ENCODE measurements at regions of chr13 and their contacts with region 1.

Region 1: GRCh38 chr13:39616087-39616694 is 13.2 kb upstream of the LHFPL6 start:
- DNase-seq: peak; percentile 70
- H3K4me3 ChIP-seq: no peak overlapping the region
- H3K27ac ChIP-seq: no peak overlapping the region
- H3K4me1 ChIP-seq: no peaks in the 10 kb centered on the region
- H3K27me3 ChIP-seq: peaks cover 5 to 7% of the 10 kb centered on the region in 2 experiments
- CTCF ChIP-seq: peak; percentile 83 to 85
- POLR2A ChIP-seq: no peak

Region 2: DNA sequence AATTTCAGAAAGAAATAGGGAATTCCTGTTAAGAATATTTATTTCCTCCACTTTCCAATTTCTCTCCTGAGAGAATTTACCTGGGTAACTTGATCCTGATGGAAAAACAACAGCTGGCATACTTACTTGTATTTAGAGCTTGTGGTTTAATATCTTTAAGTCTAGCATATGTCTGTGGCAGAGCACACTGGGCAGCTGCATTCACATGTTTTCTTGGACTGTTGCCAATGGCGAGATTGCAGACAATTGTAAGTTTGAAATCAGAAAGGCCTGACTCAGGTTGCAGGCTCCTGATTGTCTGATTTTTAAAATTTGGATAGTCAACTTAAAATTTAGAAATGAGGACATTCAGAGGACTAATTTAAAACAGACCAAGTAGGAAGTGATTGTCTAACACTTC is 511.1 kb before region 1 on chr13:
- CTCF ChIA-PET with region 1: interaction called, 10 read pairs
- POLR2A ChIA-PET with region 1: no interaction called
- dilution Hi-C with region 1: no loop called
- intact Hi-C with region 1: no loop called
- DNase-seq: peak; percentile 18
- H3K4me3 ChIP-seq: no peak overlapping the region
- H3K27ac ChIP-seq: no peak overlapping the region
- H3K4me1 ChIP-seq: no peaks in the 10 kb centered on the region
- H3K27me3 ChIP-seq: peaks cover 9 to 14% of the 10 kb centered on the region in 2 experiments
- CTCF ChIP-seq: no peak
- POLR2A ChIP-seq: no peak

Region 3: GRCh38 chr13:39263033-39263432 is 353.2 kb before region 1 on chr13:
- CTCF ChIA-PET with region 1: interaction called, 27 read pairs
- POLR2A ChIA-PET with region 1: no interaction called
- dilution Hi-C with region 1: no loop called
- intact Hi-C with region 1: no loop called
- DNase-seq: peak; percentile 71
- H3K4me3 ChIP-seq: no peak overlapping the region
- H3K27ac ChIP-seq: no peak overlapping the region
- H3K4me1 ChIP-seq: no peaks in the 10 kb centered on the region
- H3K27me3 ChIP-seq: peaks cover 2 to 11% of the 10 kb centered on the region in 2 experiments
- CTCF ChIP-seq: peak; percentile 48
- POLR2A ChIP-seq: no peak

Region 4: DNA sequence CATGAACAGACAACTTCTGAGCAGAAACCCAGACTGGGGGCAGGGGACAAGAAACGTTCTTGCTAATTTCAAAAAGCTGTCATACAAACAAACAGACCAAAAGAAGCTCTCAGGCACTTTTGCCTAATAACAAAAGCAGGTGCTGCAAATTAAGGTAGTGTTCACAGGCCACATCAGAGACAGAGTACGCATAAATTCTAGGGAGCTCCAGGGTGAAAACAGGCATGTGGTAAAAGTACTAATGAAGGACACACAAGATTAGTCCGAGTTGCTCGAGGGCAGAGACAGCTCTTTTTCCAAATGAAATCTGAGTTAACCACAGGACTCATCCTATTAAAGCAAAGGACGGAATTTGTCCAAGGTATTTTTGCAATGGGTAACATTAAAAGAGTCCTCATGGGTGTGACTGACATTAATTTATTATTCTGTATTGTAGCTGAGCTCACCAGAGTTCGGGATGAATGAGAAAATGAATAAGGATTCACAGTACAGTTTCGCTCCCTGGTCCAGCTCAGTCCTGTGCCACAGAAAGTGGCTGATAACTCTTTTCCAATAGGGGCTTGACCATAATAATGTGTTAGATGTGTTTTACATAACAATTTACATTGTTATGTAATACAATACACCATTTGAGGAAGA is 210.5 kb before region 1 on chr13:
- CTCF ChIA-PET with region 1: interaction called, 29 read pairs
- POLR2A ChIA-PET with region 1: no interaction called
- dilution Hi-C with region 1: no loop called
- intact Hi-C with region 1: no loop called
- DNase-seq: no peak
- H3K4me3 ChIP-seq: no peak overlapping the region
- H3K27ac ChIP-seq: no peak overlapping the region
- H3K4me1 ChIP-seq: peaks cover 3% of the 10 kb centered on the region
- H3K27me3 ChIP-seq: no peaks in the 10 kb centered on the region
- CTCF ChIP-seq: no peak
- POLR2A ChIP-seq: no peak

Region 5: GRCh38 chr13:39484506-39485313 is 131.5 kb before region 1 on chr13:
- CTCF ChIA-PET with region 1: interaction called, 13 read pairs
- POLR2A ChIA-PET with region 1: no interaction called
- dilution Hi-C with region 1: no loop called
- intact Hi-C with region 1: no loop called
- DNase-seq: peak; percentile 38
- H3K4me3 ChIP-seq: no peak overlapping the region
- H3K27ac ChIP-seq: no peak overlapping the region
- H3K4me1 ChIP-seq: peaks cover 22% of the 10 kb centered on the region
- H3K27me3 ChIP-seq: no peaks in the 10 kb centered on the region
- CTCF ChIP-seq: no peak
- POLR2A ChIP-seq: no peak

Region 6: GRCh38 chr13:39602614-39603366 is 13.4 kb before region 1 on chr13 and contains the start of gene LHFPL6:
- CTCF ChIA-PET with region 1: interaction called, 44 read pairs
- POLR2A ChIA-PET with region 1: interaction called, 4 read pairs
- dilution Hi-C with region 1: no loop called
- intact Hi-C with region 1: no loop called
- DNase-seq: peak; percentile 81
- H3K4me3 ChIP-seq: peak within 1 kb of the TSS; percentile 63 to 70 (median 69)
- H3K27ac ChIP-seq: peak within 1 kb of the TSS; percentile 56
- H3K4me1 ChIP-seq: peaks cover 20% of the 10 kb centered on the region
- H3K27me3 ChIP-seq: no peaks in the 10 kb centered on the region
- CTCF ChIP-seq: peak; percentile 53 to 56
- POLR2A ChIP-seq: peak; percentile 38
- total RNA-seq, gene LHFPL6: 16.6 and 17.5 TPM in 2 replicates

Measured in endothelial cell of umbilical vein (primary cell).